CD4-positive, alpha-beta memory T cell (primary cell): ENCODE measurements at regions of chr12 and their contacts with region 1.

Region 1: GRCh38 chr12:104569346-104570173 is 112.8 kb downstream of the CHST11 start:
- DNase-seq: peak; percentile 54 to 86 (median 60)
- H3K4me3 ChIP-seq: peak overlapping the region in 1 of 2 donors; percentile 1
- H3K4me3 Mint-ChIP-seq: peak overlapping the region in 7 of 8 donors; percentile 52 to 81 (median 72)
- H3K27ac ChIP-seq: peak overlapping the region; percentile 52
- H3K27ac Mint-ChIP-seq: peak overlapping the region; percentile 77 to 94 (median 84)
- H3K4me1 ChIP-seq: peaks cover 49% of the 10 kb centered on the region
- H3K4me1 Mint-ChIP-seq: peaks cover 50 to 78% (median 62%) of the 10 kb centered on the region in 4 donors
- H3K27me3 ChIP-seq: no peaks in the 10 kb centered on the region
- H3K27me3 Mint-ChIP-seq: no peaks in the 10 kb centered on the region

Region 2: GRCh38 chr12:104494137-104494792 is 75.3 kb before region 1 on chr12:
- CTCF ChIA-PET with region 1: no interaction called
- POLR2A ChIA-PET with region 1: no interaction called
- intact Hi-C with region 1: no loop called
- DNase-seq: peak; percentile 29 to 76 (median 42)
- H3K4me3 ChIP-seq: peak overlapping the region in 1 of 2 donors; percentile 32
- H3K4me3 Mint-ChIP-seq: peak overlapping the region; percentile 66 to 94 (median 84)
- H3K27ac ChIP-seq: peak overlapping the region; percentile 50
- H3K27ac Mint-ChIP-seq: peak overlapping the region; percentile 88 to 99 (median 94)
- H3K4me1 ChIP-seq: peaks cover 93% of the 10 kb centered on the region
- H3K4me1 Mint-ChIP-seq: peaks cover 77 to 96% (median 86%) of the 10 kb centered on the region in 4 donors
- H3K27me3 ChIP-seq: no peaks in the 10 kb centered on the region
- H3K27me3 Mint-ChIP-seq: no peaks in the 10 kb centered on the region

Region 3: GRCh38 chr12:104579718-104580495 is 10.3 kb after region 1 on chr12:
- CTCF ChIA-PET with region 1: interaction called, 10 read pairs
- POLR2A ChIA-PET with region 1: interaction called, 6 read pairs
- intact Hi-C with region 1: no loop called
- DNase-seq: no peak
- H3K4me3 ChIP-seq: no peak overlapping the region
- H3K4me3 Mint-ChIP-seq: peak overlapping the region in 7 of 8 donors; percentile 5 to 85 (median 47)
- H3K27ac ChIP-seq: no peak overlapping the region
- H3K27ac Mint-ChIP-seq: peak overlapping the region; percentile 0 to 73 (median 57)
- H3K4me1 ChIP-seq: peaks cover 87% of the 10 kb centered on the region
- H3K4me1 Mint-ChIP-seq: peaks cover 64 to 99% (median 83%) of the 10 kb centered on the region in 4 donors
- H3K27me3 ChIP-seq: no peaks in the 10 kb centered on the region
- H3K27me3 Mint-ChIP-seq: no peaks in the 10 kb centered on the region

Region 4: GRCh38 chr12:104604070-104604994 is 34.8 kb after region 1 on chr12:
- CTCF ChIA-PET with region 1: no interaction called
- POLR2A ChIA-PET with region 1: interaction called, 7 read pairs
- intact Hi-C with region 1: loop called (anchors 5 kb)
- DNase-seq: peak; percentile 47 to 77 (median 66)
- H3K4me3 ChIP-seq: no peak overlapping the region
- H3K4me3 Mint-ChIP-seq: peak overlapping the region; percentile 16 to 81 (median 50)
- H3K27ac ChIP-seq: peak overlapping the region; percentile 52
- H3K27ac Mint-ChIP-seq: peak overlapping the region; percentile 68 to 96 (median 90)
- H3K4me1 ChIP-seq: peaks cover 48% of the 10 kb centered on the region
- H3K4me1 Mint-ChIP-seq: peaks cover 61 to 90% (median 75%) of the 10 kb centered on the region in 4 donors
- H3K27me3 ChIP-seq: no peaks in the 10 kb centered on the region
- H3K27me3 Mint-ChIP-seq: no peaks in the 10 kb centered on the region